ENCODE measurements at regions of chr3 and their contacts with region 1.

Region 1: DNA sequence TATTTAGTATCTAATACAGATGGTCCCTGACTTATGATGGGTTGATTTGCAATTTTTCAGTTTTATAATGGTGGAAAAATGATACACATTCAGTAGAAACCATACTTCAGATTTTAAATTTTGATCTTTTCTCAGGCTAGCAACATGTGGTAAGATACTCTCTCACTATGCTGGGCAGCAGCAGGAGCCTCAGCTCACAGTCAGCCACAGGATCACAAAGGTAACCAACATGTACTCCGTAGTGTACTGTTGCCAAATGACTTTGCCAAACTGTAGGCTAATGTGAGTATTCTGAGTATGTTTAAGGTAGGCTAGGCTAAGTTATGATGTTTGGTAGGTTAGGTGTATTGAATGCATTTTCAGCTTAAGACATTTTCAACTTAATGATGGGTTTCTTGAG is 498.6 kb upstream of the DPPA4 start:
- DNase-seq: no peak
- ATAC-seq: no peak
- H3K4me3 ChIP-seq: no peak overlapping the region
- H3K4me3 Mint-ChIP-seq: no peak overlapping the region
- H3K27ac ChIP-seq: no peak overlapping the region
- H3K27ac Mint-ChIP-seq: no peak overlapping the region
- H3K4me1 ChIP-seq: no peaks in the 10 kb centered on the region
- H3K4me1 Mint-ChIP-seq: no peaks in the 10 kb centered on the region
- H3K27me3 ChIP-seq: no peaks in the 10 kb centered on the region
- H3K27me3 Mint-ChIP-seq: no peaks in the 10 kb centered on the region
- CTCF ChIP-seq: no peak

Region 2: GRCh38 chr3:109618766-109619378 is 217.1 kb before region 1 on chr3:
- CTCF ChIA-PET with region 1: no interaction called
- POLR2A ChIA-PET with region 1: no interaction called
- intact Hi-C with region 1: no loop called
- DNase-seq: no peak
- ATAC-seq: no peak
- H3K4me3 ChIP-seq: no peak overlapping the region
- H3K4me3 Mint-ChIP-seq: no peak overlapping the region
- H3K27ac ChIP-seq: no peak overlapping the region
- H3K27ac Mint-ChIP-seq: no peak overlapping the region
- H3K4me1 ChIP-seq: no peaks in the 10 kb centered on the region
- H3K4me1 Mint-ChIP-seq: no peaks in the 10 kb centered on the region
- H3K27me3 ChIP-seq: no peaks in the 10 kb centered on the region
- H3K27me3 Mint-ChIP-seq: no peaks in the 10 kb centered on the region
- CTCF ChIP-seq: no peak

Region 3: DNA sequence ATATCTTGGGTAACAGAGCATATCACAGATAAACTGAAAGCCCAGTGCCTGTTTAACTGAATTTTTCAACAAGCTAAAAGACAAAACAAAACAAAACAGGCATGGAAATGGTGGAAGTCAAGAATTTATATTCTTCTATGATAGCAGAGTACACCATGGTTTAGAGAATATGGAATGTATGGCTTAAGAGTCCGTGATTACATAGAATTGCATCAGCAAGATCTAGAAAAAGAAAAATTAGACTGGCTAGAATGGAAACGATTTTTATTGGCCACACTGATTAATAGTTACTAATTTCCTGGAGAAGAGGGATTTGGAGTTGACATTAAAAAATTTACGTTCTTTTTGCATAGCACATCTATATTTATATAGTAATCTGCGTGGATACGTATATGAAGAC is 63.4 kb before region 1 on chr3:
- CTCF ChIA-PET with region 1: no interaction called
- POLR2A ChIA-PET with region 1: no interaction called
- intact Hi-C with region 1: loop called in 1 of 2 experiments (anchors 1 kb)
- DNase-seq: no peak
- ATAC-seq: no peak
- H3K4me3 ChIP-seq: no peak overlapping the region
- H3K4me3 Mint-ChIP-seq: no peak overlapping the region
- H3K27ac ChIP-seq: no peak overlapping the region
- H3K27ac Mint-ChIP-seq: no peak overlapping the region
- H3K4me1 ChIP-seq: peaks cover 9% of the 10 kb centered on the region
- H3K4me1 Mint-ChIP-seq: peaks cover 19% of the 10 kb centered on the region
- H3K27me3 ChIP-seq: no peaks in the 10 kb centered on the region
- H3K27me3 Mint-ChIP-seq: no peaks in the 10 kb centered on the region
- CTCF ChIP-seq: no peak

Region 4: GRCh38 chr3:109882144-109882543 is 46.2 kb after region 1 on chr3:
- CTCF ChIA-PET with region 1: no interaction called
- POLR2A ChIA-PET with region 1: no interaction called
- intact Hi-C with region 1: loop called in 1 of 2 experiments (anchors 5 kb)
- DNase-seq: no peak
- ATAC-seq: no peak
- H3K4me3 ChIP-seq: no peak overlapping the region
- H3K4me3 Mint-ChIP-seq: no peak overlapping the region
- H3K27ac ChIP-seq: no peak overlapping the region
- H3K27ac Mint-ChIP-seq: no peak overlapping the region
- H3K4me1 ChIP-seq: no peaks in the 10 kb centered on the region
- H3K4me1 Mint-ChIP-seq: peaks cover 1% of the 10 kb centered on the region
- H3K27me3 ChIP-seq: no peaks in the 10 kb centered on the region
- H3K27me3 Mint-ChIP-seq: no peaks in the 10 kb centered on the region
- CTCF ChIP-seq: no peak